ENCODE measurements at regions of chr6 and their contacts with region 1.

Region 1: GRCh38 chr6:72553531-72554511 is 68.0 kb upstream of the KCNQ5 start:
- DNase-seq: peak; percentile 91
- H3K4me3 ChIP-seq: peak overlapping the region in 2 of 3 experiments; percentile 18 to 19
- H3K27ac ChIP-seq: peak overlapping the region; percentile 98
- H3K4me1 ChIP-seq: peaks cover 31% of the 10 kb centered on the region
- H3K27me3 ChIP-seq: no peaks in the 10 kb centered on the region
- CTCF ChIP-seq: no peak

Region 2: DNA sequence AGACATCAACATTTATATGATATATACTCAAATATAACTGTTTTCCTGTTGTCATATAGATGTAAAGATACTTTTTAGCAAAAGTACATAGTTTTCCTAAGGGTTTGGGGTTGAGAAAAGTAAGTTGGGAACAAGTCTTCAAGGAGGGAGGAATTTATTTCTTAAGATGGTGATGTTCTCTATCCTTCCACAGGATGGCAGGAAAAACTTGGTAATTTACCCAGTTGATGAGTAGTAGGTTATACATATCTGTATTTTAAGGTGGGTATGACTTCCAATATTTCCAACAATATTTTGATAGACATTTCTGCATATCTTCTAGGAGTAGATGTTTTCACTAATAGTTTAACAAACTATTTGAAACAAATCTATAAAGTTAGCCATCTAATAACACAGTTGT is 413.0 kb before region 1 on chr6:
- CTCF ChIA-PET with region 1: no interaction called
- dilution Hi-C with region 1: no loop called
- in situ Hi-C with region 1: no loop called
- intact Hi-C with region 1: loop called (anchors 10 kb)
- DNase-seq: peak; percentile 11
- H3K4me3 ChIP-seq: no peak overlapping the region
- H3K27ac ChIP-seq: no peak overlapping the region
- H3K4me1 ChIP-seq: no peaks in the 10 kb centered on the region
- H3K27me3 ChIP-seq: no peaks in the 10 kb centered on the region
- CTCF ChIP-seq: peak; percentile 32 to 46

Region 3: GRCh38 chr6:72425003-72425681 is 128.7 kb before region 1 on chr6:
- CTCF ChIA-PET with region 1: no interaction called
- dilution Hi-C with region 1: no loop called
- in situ Hi-C with region 1: no loop called
- intact Hi-C with region 1: loop called (anchors 2 kb)
- DNase-seq: peak; percentile 76
- H3K4me3 ChIP-seq: no peak overlapping the region
- H3K27ac ChIP-seq: peak overlapping the region; percentile 12
- H3K4me1 ChIP-seq: peaks cover 39% of the 10 kb centered on the region
- H3K27me3 ChIP-seq: no peaks in the 10 kb centered on the region
- CTCF ChIP-seq: no peak

Measured in mammary epithelial cell (primary cell).